Transverse colon (tissue), 4 donors: ENCODE measurements at regions of chr20 and their contacts with region 1.

Region 1: GRCh38 chr20:63973636-63974402 is 4.1 kb upstream of the ZNF512B start:
- DNase-seq: peak; percentile 89
- H3K4me3 ChIP-seq: peak overlapping the region in 2 of 4 donors; percentile 9 to 39
- H3K27ac ChIP-seq: peak overlapping the region in 3 of 4 donors; percentile 1 to 53 (median 23)
- H3K4me1 ChIP-seq: peaks cover 8 to 24% (median 12%) of the 10 kb centered on the region in 4 donors
- H3K27me3 ChIP-seq: peaks cover 13% of the 10 kb centered on the region
- CTCF ChIP-seq: peak; percentile 97 to 99 (median 99)
- EP300 ChIP-seq: no peak
- POLR2A ChIP-seq: no peak

Region 2: DNA sequence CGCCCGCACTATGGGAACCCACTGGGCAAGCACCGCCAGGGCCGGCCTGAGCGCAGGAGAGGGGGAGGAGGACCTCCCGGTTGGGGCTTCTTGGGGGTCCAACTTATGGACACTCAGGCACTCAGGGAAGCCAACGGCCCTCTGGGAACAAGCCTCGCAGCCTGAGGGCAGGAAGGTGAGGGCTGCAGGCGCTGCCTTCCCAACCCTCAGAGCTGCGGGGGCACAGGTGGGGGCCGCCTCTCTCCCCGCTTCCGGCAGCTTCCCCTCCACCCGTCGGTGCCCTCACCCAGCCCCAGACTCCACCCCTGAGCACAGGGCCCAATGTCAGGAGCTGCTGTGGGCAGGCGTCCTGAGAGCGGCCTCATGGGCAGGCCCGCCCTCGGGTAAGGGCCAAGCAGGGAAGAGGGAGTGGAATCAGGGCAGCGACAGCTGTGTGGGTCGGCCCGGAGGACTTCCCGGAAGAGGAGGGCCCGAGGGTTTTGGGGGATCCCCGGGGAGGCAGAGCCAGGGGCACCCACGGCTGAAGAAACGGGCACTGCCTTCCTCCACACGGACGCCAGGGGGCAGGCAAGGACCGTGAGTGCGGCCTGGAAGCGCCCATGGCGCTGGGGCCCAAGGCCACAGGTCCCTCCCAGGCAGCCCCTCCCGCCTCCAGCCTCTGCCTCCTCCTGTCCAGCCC is 436.2 kb before region 1 on chr20:
- in situ Hi-C with region 1: no loop called
- intact Hi-C with region 1: loop called (anchors 5 kb)
- DNase-seq: peak; percentile 97
- H3K4me3 ChIP-seq: peak overlapping the region in 3 of 4 donors; percentile 45 to 56 (median 46)
- H3K27ac ChIP-seq: peak overlapping the region; percentile 89 to 98 (median 96)
- H3K4me1 ChIP-seq: peaks cover 16 to 51% (median 42%) of the 10 kb centered on the region in 4 donors
- H3K27me3 ChIP-seq: peaks cover 10% of the 10 kb centered on the region
- CTCF ChIP-seq: peak; percentile 92 to 100 (median 95)
- EP300 ChIP-seq: peak; percentile 41
- POLR2A ChIP-seq: peak; percentile 94

Region 3: DNA sequence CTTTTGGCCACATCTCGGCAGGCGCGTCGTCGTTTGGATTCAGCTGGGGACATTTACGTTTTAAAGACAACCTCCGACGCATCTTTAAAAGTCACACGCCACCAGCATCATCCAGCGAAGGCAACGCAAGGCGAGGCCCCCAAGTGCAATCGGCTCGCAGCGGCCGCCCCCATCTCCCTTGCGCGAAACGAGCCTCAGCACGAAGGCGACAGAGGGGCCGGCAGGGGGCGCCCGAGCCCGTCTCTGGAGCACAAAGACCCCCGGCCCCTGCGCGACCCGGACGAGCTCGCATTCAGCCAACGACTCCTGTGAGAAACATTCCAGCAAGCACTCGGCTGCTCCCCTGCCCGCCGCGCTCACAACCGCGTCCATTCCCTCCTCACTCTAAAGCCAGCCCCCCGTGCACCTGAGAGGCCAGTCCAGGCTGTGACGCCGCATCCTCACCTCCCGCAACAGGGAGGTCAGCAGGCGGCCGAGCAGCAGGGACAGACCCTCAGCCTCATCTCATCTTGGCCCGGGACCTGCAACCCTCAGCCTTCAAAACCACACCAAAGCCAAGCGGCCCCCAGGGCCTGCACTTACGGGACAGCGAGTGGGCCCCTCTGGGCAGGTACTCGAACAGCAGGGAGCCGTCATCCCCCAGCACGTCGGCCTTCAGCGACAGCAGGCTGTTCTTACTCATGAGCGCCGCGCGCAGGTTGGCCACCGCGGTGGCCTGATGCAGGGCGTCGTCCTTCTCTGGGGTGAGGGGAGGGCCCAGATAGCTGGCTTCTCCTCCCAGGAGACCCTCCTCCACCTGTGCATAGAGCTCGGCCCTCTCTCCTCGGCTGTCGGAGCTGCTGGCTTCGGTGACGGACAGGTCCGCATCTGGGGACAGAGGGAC is 198.5 kb before region 1 on chr20:
- in situ Hi-C with region 1: no loop called
- intact Hi-C with region 1: loop called (anchors 10 kb)
- DNase-seq: no peak
- H3K4me3 ChIP-seq: peak overlapping the region in 1 of 4 donors; percentile 13
- H3K27ac ChIP-seq: no peak overlapping the region
- H3K4me1 ChIP-seq: peaks cover 0 to 12% (median 0%) of the 10 kb centered on the region in 4 donors
- H3K27me3 ChIP-seq: peaks cover 6% of the 10 kb centered on the region
- CTCF ChIP-seq: peak; percentile 32 to 60 (median 52)
- EP300 ChIP-seq: no peak
- POLR2A ChIP-seq: no peak

Region 4: GRCh38 chr20:63908008-63908624 is 65.7 kb before region 1 on chr20:
- in situ Hi-C with region 1: no loop called
- intact Hi-C with region 1: loop called (anchors 5 kb)
- DNase-seq: peak; percentile 80
- H3K4me3 ChIP-seq: no peak overlapping the region
- H3K27ac ChIP-seq: peak overlapping the region; percentile 66 to 75 (median 70)
- H3K4me1 ChIP-seq: peaks cover 15 to 76% (median 47%) of the 10 kb centered on the region in 4 donors
- H3K27me3 ChIP-seq: no peaks in the 10 kb centered on the region
- CTCF ChIP-seq: no peak
- EP300 ChIP-seq: no peak
- POLR2A ChIP-seq: no peak

Region 5: DNA sequence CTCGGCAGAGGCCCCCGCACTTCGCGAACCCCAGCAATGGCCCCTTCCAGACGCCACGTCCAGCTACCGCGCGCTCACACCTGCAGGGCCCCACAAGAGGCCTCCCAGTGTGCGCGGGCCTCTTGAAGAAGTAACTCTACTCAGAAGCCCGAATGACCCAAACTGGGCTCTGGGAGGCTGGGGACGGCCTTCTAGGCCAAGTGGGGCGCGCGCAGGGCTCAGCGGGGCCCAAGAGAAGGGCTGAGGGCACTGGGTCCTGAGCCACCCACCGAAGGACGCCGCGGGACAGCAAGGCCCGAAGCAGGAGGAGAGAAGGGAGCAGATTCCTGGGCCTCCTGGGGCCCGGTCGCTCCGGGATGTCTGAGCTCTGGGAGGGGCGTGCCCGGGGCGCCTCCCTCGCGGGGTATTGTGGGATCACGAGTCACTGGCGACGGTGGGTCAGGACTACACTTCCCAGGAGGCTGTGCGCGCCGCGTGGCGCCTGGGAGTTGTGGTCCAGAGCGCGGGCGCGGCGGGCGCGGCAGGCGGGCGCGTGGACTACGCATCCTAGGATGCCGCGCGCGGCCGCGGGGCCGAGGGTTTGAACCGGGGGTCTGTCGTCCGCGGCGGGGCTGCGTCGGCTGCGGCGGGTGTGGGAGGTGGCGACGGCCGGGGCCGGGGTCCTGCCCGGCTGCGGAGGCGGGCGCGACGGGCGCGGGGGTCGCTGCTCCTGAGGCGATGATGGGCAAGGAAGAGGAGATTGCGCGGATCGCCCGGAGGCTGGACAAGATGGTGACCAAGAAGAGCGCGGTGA is 89.0 kb after region 1 on chr20 and contains the start of gene TCEA2:
- in situ Hi-C with region 1: no loop called
- intact Hi-C with region 1: no loop called
- DNase-seq: peak; percentile 97
- H3K4me3 ChIP-seq: peak within 1 kb of the TSS; percentile 60 to 89 (median 72)
- H3K27ac ChIP-seq: peak within 1 kb of the TSS; percentile 76 to 88 (median 78)
- H3K4me1 ChIP-seq: peaks cover 13 to 27% (median 20%) of the 10 kb centered on the region in 4 donors
- H3K27me3 ChIP-seq: peaks cover 4% of the 10 kb centered on the region
- CTCF ChIP-seq: no peak
- EP300 ChIP-seq: no peak
- POLR2A ChIP-seq: peak; percentile 73
- total RNA-seq, gene TCEA2: 5.6 to 94.3 (median 14.8) TPM